ENCODE measurements at regions of chr7 and their contacts with region 1.

Region 1: GRCh38 chr7:140696680-140697446 is at the start of gene NDUFB2:
- DNase-seq: peak; percentile 99
- H3K4me3 ChIP-seq: peak within 1 kb of the TSS; percentile 83 to 100 (median 96)
- H3K27ac ChIP-seq: peak within 1 kb of the TSS; percentile 90 to 99 (median 96)
- H3K4me1 ChIP-seq: peaks cover 13 to 36% (median 28%) of the 10 kb centered on the region in 6 donors
- H3K27me3 ChIP-seq: no peaks in the 10 kb centered on the region
- CTCF ChIP-seq: peak in 2 of 11 experiments; percentile 4 to 24
- POLR2A ChIP-seq: peak in 2 of 3 donors; percentile 80 to 89
- total RNA-seq, gene NDUFB2: 104 to 235 (median 123) TPM

Region 2: DNA sequence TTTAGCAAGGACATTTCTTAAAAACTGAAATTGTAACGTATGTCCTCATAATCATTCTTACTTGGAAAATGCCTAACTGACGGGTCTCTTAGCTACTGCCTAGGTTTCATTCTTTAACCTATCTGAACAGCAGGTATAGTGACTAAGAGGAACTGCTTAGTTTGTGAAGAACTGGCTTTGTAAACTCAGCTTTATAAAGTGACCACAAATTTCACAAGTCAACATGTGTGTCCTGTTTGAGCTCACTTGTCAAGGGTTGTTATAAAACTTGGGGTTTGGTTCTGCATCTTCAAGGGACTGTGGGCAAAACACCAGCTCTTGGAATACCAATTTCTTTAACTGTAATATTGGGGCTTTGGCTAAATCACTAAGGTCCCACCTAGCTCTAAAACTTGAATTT is 285.6 kb after region 1 on chr7:
- intact Hi-C with region 1: no loop called
- DNase-seq: no peak
- H3K4me3 ChIP-seq: no peak overlapping the region
- H3K27ac ChIP-seq: peak overlapping the region in 4 of 8 donors; percentile 0 to 63 (median 16)
- H3K4me1 ChIP-seq: peaks cover 0 to 4% (median 0%) of the 10 kb centered on the region in 6 donors
- H3K27me3 ChIP-seq: no peaks in the 10 kb centered on the region
- CTCF ChIP-seq: no peak
- POLR2A ChIP-seq: no peak

Region 3: GRCh38 chr7:141001122-141001521 is 304.3 kb after region 1 on chr7:
- intact Hi-C with region 1: no loop called
- DNase-seq: no peak
- H3K4me3 ChIP-seq: no peak overlapping the region
- H3K27ac ChIP-seq: no peak overlapping the region
- H3K4me1 ChIP-seq: no peaks in the 10 kb centered on the region
- H3K27me3 ChIP-seq: peaks cover 0 to 4% (median 0%) of the 10 kb centered on the region in 7 donors
- CTCF ChIP-seq: no peak
- POLR2A ChIP-seq: no peak

Region 4: DNA sequence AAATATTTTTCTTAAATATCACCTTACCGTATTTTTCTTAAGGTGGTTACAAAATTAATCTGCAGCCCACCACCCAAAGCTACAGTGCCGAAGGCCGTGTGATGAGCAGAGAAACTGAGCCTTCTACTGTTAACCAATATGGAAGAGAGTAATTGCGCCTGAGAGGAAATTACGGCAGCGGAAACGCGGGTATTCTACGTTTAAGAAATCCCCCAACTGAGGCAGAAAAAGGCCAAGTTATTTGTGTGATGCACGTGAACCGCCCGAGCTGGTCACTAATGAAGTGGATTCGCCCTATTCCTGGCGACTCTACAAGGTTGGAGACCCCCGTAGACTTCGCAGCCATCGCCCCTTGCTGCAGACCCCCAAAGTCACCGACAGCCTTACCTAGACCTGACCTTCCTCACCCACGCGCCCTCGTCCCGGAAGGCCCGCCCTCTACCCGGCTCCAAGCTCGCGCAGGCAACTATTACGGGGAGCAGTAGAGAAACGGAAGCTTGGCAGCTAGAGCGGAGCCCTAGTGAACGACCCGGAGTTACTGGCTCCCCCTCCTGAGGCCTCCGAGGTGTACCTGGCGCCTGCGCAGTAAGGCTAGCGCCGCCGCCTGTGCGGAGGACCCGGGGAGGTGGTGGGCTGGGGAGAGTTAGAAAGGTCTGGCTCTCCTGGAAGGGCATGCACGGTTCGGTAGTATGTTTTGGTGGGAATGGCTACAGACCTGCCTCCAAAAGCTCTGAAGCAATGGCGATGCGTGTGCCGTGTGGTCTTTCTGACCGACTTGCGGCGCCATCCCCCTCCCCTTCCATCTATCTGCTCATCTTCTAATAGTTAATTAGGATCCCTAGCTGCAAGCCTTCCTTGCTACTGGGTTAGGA is 317.9 kb after region 1 on chr7 and contains the start of gene MRPS33:
- intact Hi-C with region 1: loop called (anchors 10 kb)
- DNase-seq: peak; percentile 99
- H3K4me3 ChIP-seq: peak within 1 kb of the TSS; percentile 49 to 77 (median 58)
- H3K27ac ChIP-seq: peak within 1 kb of the TSS; percentile 90 to 95 (median 90)
- H3K4me1 ChIP-seq: peaks cover 11 to 37% (median 24%) of the 10 kb centered on the region in 6 donors
- H3K27me3 ChIP-seq: peaks cover 0 to 13% (median 0%) of the 10 kb centered on the region in 7 donors
- CTCF ChIP-seq: peak in 7 of 11 experiments; percentile 23 to 57 (median 47)
- POLR2A ChIP-seq: peak in 2 of 3 donors; percentile 21 to 64
- total RNA-seq, gene MRPS33: 5.9 to 31.3 (median 24.8) TPM

Measured in spleen (tissue), 13 donors.